Activated CD8-positive, alpha-beta T cell treated with anti-CD3 and anti-CD28 coated beads, Interleukin-2, amount 10 ng/mL, durations not matched to agents 7 days and 5 days (primary cell): ENCODE measurements at regions of chr21 and their contacts with region 1.

Region 1: GRCh38 chr21:45130324-45130774 is 56.0 kb downstream of the ADARB1 start:
- DNase-seq: no peak
- ATAC-seq: no peak
- H3K4me3 Mint-ChIP-seq: no peak overlapping the region
- H3K27ac Mint-ChIP-seq: no peak overlapping the region
- H3K4me1 Mint-ChIP-seq: peaks cover 21% of the 10 kb centered on the region
- H3K27me3 Mint-ChIP-seq: no peaks in the 10 kb centered on the region

Region 2: DNA sequence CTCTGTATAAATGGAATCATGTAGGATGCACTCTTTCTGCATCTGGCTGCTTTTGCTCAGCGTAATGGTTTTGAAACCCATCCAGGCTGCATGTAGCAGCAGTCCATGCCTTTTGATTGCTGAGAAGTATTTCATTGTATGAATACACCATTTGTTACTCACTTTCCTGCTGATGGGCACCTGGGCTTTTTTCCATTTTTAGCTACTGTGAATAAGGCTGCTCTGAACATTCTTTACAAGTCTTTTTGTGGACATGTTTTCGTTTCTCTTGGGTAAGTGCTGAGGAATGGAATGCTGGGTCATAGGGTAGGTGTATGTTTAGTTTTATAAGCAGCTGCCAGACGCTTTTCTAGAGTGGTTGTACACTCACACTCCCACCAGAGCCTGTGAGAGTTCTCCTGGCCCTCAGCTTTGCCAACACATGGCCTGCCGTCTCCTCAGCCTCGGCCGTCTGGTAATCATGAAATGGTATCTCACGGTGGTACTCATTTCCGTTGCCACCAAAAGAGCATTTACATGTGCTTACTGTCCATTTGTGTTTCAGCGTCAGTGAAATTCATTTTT is 167.9 kb before region 1 on chr21:
- CTCF ChIA-PET with region 1: interaction called, 48 read pairs
- POLR2A ChIA-PET with region 1: no interaction called
- DNase-seq: no peak
- ATAC-seq: no peak
- H3K4me3 Mint-ChIP-seq: no peak overlapping the region
- H3K27ac Mint-ChIP-seq: no peak overlapping the region
- H3K4me1 Mint-ChIP-seq: peaks cover 33% of the 10 kb centered on the region
- H3K27me3 Mint-ChIP-seq: no peaks in the 10 kb centered on the region

Region 3: DNA sequence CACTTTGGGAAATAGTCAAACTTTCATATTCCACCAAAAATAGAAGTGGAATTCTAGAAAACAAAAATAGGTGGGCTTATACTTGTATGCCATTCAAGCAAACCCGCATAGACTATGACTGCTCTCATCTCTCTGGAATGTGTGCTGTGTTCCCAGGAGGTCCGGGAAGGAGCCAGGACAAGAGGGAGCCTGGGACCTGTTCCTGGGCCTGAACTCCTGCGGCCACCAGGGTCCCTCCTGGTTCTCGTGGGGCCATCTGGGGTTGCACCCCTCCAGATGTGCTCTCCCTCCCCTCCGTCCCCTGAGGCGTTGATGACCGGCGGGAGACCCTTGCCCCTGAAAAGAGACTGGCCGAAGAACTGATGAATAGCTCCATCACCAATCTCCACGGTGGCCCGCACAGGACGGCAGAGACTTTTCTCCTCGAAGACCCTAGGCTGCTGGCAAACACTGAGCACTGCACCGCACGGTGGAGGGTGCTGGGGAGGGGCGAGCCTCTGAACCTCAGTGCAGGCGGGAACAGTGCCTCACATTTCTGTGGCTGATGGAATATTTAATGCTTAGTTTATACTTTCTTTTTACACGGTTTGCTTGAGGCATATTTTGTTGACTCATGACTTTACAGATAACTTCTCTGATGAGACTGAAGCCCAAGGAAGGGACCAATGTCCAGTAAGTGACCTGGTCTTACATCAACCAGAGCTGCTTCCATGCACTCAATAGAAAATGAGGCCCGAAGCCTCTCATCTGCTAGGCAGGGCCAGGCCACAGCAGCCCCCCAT is 65.5 kb before region 1 on chr21:
- CTCF ChIA-PET with region 1: interaction called, 12 read pairs
- POLR2A ChIA-PET with region 1: interaction called, 3 read pairs
- DNase-seq: no peak
- ATAC-seq: no peak
- H3K4me3 Mint-ChIP-seq: no peak overlapping the region
- H3K27ac Mint-ChIP-seq: no peak overlapping the region
- H3K4me1 Mint-ChIP-seq: no peaks in the 10 kb centered on the region
- H3K27me3 Mint-ChIP-seq: peaks cover 17% of the 10 kb centered on the region

Region 4: DNA sequence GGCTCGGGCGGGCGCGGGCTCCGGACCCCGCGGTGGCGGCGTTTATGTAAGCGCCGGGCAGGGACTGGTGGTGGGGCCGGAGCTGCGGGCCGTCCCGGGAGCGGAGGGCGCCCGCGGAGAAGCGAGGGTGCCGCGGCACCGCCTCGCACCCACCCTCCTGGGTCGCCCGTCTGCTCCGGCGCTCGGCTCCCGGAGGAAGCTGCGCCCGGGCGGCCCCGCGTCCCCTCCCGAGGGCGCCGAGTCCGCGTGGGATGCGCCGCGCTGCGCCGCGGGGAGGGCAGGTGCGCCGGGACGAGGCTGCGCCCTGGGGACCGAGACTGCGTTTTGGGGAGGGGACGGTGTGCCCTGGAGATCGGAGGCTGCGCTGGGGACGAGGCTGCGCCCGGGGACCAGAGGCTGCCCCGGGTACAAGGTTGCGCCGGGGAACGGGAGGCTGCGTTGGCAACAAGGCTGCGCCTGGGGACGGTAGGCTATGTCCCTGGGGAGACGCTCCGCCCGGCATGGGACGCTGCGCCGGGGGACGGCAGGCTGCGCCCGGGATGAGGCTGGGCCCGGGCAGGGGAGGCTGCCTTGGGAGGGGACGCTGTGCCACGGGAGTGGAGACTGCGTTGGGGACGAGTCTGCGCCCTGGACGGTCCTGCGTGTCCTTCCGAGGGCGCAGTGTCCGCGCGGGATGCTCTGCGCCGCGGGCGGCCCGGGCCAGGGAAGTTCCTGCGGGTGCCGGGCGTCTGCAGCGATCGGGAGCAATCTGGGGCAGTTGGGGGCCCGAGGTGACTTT is 55.3 kb before region 1 on chr21:
- CTCF ChIA-PET with region 1: interaction called, 65 read pairs
- POLR2A ChIA-PET with region 1: no interaction called
- DNase-seq: peak; percentile 32
- ATAC-seq: peak; percentile 5
- H3K4me3 Mint-ChIP-seq: peak overlapping the region; percentile 82
- H3K27ac Mint-ChIP-seq: peak overlapping the region; percentile 78
- H3K4me1 Mint-ChIP-seq: peaks cover 50% of the 10 kb centered on the region
- H3K27me3 Mint-ChIP-seq: no peaks in the 10 kb centered on the region

Region 5: GRCh38 chr21:45098867-45099266 is 31.5 kb before region 1 on chr21:
- CTCF ChIA-PET with region 1: interaction called, 80 read pairs
- POLR2A ChIA-PET with region 1: no interaction called
- DNase-seq: no peak
- ATAC-seq: no peak
- H3K4me3 Mint-ChIP-seq: no peak overlapping the region
- H3K27ac Mint-ChIP-seq: no peak overlapping the region
- H3K4me1 Mint-ChIP-seq: peaks cover 43% of the 10 kb centered on the region
- H3K27me3 Mint-ChIP-seq: no peaks in the 10 kb centered on the region

Region 6: GRCh38 chr21:45152265-45152746 is 22.0 kb after region 1 on chr21:
- CTCF ChIA-PET with region 1: interaction called, 11 read pairs
- POLR2A ChIA-PET with region 1: no interaction called
- DNase-seq: peak; percentile 88
- ATAC-seq: peak; percentile 98
- H3K4me3 Mint-ChIP-seq: peak overlapping the region; percentile 65
- H3K27ac Mint-ChIP-seq: peak overlapping the region; percentile 84
- H3K4me1 Mint-ChIP-seq: peaks cover 47% of the 10 kb centered on the region
- H3K27me3 Mint-ChIP-seq: no peaks in the 10 kb centered on the region